ENCODE measurements at regions of chr4 and their contacts with region 1.

Region 1: GRCh38 chr4:77044461-77045150 is 31.2 kb downstream of the CCNI start:
- DNase-seq: peak in 1 of 35 experiments; percentile 62
- ATAC-seq: peak in 3 of 4 experiments; percentile 39 to 56 (median 49)
- H3K4me3 ChIP-seq: no peak overlapping the region
- H3K4me3 Mint-ChIP-seq: no peak overlapping the region
- H3K27ac ChIP-seq: no peak overlapping the region
- H3K27ac Mint-ChIP-seq: peak overlapping the region; percentile 30 to 34
- H3K4me1 ChIP-seq: peaks cover 0 to 7% of the 10 kb centered on the region in 2 experiments
- H3K4me1 Mint-ChIP-seq: peaks cover 13 to 17% (median 14%) of the 10 kb centered on the region in 3 donors
- H3K27me3 ChIP-seq: no peaks in the 10 kb centered on the region
- H3K27me3 Mint-ChIP-seq: no peaks in the 10 kb centered on the region

Region 2: GRCh38 chr4:76993787-76994641 is 50.6 kb before region 1 on chr4:
- CTCF ChIA-PET with region 1: interaction called, 5 to 11 read pairs
- POLR2A ChIA-PET with region 1: interaction called in 1 of 2 experiments, 4 read pairs
- DNase-seq: peak; percentile 29 to 81 (median 51)
- ATAC-seq: peak; percentile 84 to 89 (median 86)
- H3K4me3 ChIP-seq: peak overlapping the region; percentile 25 to 59
- H3K4me3 Mint-ChIP-seq: peak overlapping the region; percentile 52 to 66 (median 59)
- H3K27ac ChIP-seq: peak overlapping the region; percentile 58
- H3K27ac Mint-ChIP-seq: peak overlapping the region; percentile 68 to 86
- H3K4me1 ChIP-seq: peaks cover 41 to 54% of the 10 kb centered on the region in 2 experiments
- H3K4me1 Mint-ChIP-seq: peaks cover 61 to 70% (median 62%) of the 10 kb centered on the region in 3 donors
- H3K27me3 ChIP-seq: no peaks in the 10 kb centered on the region
- H3K27me3 Mint-ChIP-seq: no peaks in the 10 kb centered on the region

Region 3: DNA sequence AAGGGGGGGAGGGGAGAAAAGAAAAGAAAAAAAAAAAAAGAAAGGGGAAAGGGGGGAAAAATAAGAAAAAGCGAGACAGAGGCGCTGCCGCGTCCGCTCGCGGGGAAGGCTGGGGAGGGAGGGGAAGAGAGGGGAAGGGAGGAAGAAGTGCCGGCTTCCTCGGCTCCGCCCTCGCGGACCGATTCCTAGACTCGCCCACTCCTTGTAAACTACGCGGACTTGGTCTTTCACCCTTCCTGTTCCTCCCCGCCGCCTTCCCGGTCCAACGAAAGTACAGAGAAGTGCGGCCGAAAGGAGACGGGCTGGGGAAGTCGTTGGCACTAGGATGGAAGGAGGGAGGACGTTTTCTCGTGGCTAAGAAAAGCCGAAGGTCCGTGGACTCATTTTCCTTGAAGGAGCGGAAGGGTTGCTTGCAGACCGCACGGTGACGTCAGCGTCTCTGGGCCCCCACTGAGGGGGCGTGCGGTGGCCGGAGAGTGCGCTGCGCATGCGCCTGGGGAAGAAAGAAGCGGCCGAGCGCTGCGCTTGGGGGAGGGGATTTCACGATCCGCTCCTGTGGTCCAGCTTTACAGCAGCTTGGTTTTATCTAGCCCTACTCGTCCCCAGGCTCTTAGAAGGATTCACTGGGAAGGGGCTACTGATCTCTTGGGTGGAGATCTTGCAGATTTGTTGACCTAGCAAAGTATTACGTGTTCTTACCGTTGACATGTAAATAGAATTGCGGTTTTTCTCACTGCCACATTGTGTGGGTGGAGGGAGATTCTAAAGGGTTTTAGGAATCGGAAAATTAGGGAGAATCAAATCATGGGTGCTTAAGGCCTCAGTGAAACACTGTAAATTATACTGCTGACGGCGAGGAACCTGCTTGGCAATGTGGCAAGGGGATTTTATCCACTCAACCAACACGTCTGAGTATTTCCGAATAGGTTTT is 31.5 kb after region 1 on chr4 and contains the start of gene CCNI:
- CTCF ChIA-PET with region 1: interaction called, 6 to 13 read pairs
- POLR2A ChIA-PET with region 1: interaction called in 1 of 2 experiments, 12 read pairs
- DNase-seq: peak; percentile 84 to 95 (median 90)
- ATAC-seq: peak; percentile 71 to 82 (median 77)
- H3K4me3 ChIP-seq: peak within 1 kb of the TSS; percentile 73 to 93
- H3K4me3 Mint-ChIP-seq: peak within 1 kb of the TSS in 2 of 3 donors; percentile 99 to 100
- H3K27ac ChIP-seq: peak within 1 kb of the TSS; percentile 100
- H3K27ac Mint-ChIP-seq: peak within 1 kb of the TSS; percentile 100
- H3K4me1 ChIP-seq: peaks cover 20 to 37% of the 10 kb centered on the region in 2 experiments
- H3K4me1 Mint-ChIP-seq: peaks cover 31 to 50% (median 43%) of the 10 kb centered on the region in 3 donors
- H3K27me3 ChIP-seq: no peaks in the 10 kb centered on the region
- H3K27me3 Mint-ChIP-seq: peaks cover 0 to 3% of the 10 kb centered on the region in 2 donors
- total RNA-seq, gene CCNI: 229 to 359 (median 256) TPM

Region 4: DNA sequence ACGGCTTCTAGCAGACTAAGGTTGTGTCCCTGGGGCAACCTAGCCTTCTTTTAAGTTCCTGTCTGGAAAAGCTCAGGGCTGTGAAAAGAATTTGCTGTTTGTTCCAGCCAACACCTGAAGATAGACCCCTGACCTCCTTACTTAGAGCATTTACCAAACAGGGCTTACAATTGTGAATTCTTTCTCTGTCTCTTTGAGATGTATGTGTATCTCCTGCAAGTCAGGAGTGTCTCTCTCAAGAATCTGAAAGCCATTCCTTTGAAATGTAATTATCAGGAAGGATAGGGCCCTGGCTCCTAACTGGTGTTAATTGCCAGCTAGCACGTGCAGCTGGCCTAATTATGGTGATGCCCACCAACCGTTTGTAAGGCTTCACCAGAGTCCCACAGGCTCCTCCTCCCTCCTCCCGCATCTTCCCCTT is 130.6 kb after region 1 on chr4:
- CTCF ChIA-PET with region 1: interaction called, 3 to 11 read pairs
- POLR2A ChIA-PET with region 1: no interaction called
- DNase-seq: no peak
- ATAC-seq: no peak
- H3K4me3 ChIP-seq: no peak overlapping the region
- H3K4me3 Mint-ChIP-seq: no peak overlapping the region
- H3K27ac ChIP-seq: no peak overlapping the region
- H3K27ac Mint-ChIP-seq: no peak overlapping the region
- H3K4me1 ChIP-seq: no peaks in the 10 kb centered on the region
- H3K4me1 Mint-ChIP-seq: no peaks in the 10 kb centered on the region
- H3K27me3 ChIP-seq: peaks cover 0 to 5% of the 10 kb centered on the region in 2 experiments
- H3K27me3 Mint-ChIP-seq: peaks cover 5 to 11% of the 10 kb centered on the region in 2 donors

Region 5: GRCh38 chr4:77203380-77204197 is 159.0 kb after region 1 on chr4:
- CTCF ChIA-PET with region 1: interaction called, 55 to 80 read pairs
- POLR2A ChIA-PET with region 1: no interaction called
- DNase-seq: peak; percentile 16 to 85 (median 54)
- ATAC-seq: peak; percentile 43 to 78 (median 71)
- H3K4me3 ChIP-seq: no peak overlapping the region
- H3K4me3 Mint-ChIP-seq: no peak overlapping the region
- H3K27ac ChIP-seq: no peak overlapping the region
- H3K27ac Mint-ChIP-seq: no peak overlapping the region
- H3K4me1 ChIP-seq: peaks cover 2 to 6% of the 10 kb centered on the region in 2 experiments
- H3K4me1 Mint-ChIP-seq: peaks cover 2 to 7% (median 6%) of the 10 kb centered on the region in 3 donors
- H3K27me3 ChIP-seq: no peaks in the 10 kb centered on the region
- H3K27me3 Mint-ChIP-seq: peaks cover 0 to 9% of the 10 kb centered on the region in 2 donors